ENCODE measurements at regions of chr22 and their contacts with region 1.

Region 1: DNA sequence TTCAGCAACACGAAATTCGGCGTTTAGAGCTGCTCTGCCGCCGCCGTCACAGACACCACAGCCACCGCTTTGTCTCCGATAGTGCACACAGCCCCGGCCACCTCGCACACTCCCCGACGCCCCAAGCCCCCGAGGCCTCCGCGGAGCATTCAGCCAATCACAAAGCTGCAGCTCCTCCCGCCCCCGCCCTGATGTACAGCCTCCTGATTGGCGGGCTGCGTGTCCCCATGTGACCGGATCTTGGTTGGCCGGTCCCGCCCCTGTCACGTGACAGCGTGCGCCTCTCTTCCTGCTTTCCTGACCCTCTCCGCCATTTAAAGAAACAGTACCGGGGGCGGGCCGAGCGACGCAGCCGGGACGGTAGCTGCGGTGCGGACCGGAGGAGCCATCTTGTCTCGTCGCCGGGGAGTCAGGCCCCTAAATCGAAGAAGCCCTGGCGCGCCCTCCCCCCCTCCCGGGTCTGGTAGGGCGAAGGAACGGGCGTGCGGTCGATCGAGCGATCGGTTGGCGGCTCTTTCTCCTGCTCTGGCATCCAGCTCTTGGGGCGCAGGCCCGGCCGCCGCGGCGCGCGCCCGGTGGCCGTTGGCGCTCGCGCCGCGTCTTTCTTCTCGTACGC is at the start of gene TUG1:
- DNase-seq: peak; percentile 93
- ATAC-seq: peak; percentile 92
- H3K4me3 Mint-ChIP-seq: peak within 1 kb of the TSS; percentile 95
- H3K27ac Mint-ChIP-seq: peak within 1 kb of the TSS; percentile 94
- H3K4me1 Mint-ChIP-seq: peaks cover 56% of the 10 kb centered on the region
- H3K27me3 Mint-ChIP-seq: no peaks in the 10 kb centered on the region
- CTCF ChIP-seq: no peak
- total RNA-seq, gene TUG1: 70.4 and 83.0 TPM in 2 replicates

Region 2: DNA sequence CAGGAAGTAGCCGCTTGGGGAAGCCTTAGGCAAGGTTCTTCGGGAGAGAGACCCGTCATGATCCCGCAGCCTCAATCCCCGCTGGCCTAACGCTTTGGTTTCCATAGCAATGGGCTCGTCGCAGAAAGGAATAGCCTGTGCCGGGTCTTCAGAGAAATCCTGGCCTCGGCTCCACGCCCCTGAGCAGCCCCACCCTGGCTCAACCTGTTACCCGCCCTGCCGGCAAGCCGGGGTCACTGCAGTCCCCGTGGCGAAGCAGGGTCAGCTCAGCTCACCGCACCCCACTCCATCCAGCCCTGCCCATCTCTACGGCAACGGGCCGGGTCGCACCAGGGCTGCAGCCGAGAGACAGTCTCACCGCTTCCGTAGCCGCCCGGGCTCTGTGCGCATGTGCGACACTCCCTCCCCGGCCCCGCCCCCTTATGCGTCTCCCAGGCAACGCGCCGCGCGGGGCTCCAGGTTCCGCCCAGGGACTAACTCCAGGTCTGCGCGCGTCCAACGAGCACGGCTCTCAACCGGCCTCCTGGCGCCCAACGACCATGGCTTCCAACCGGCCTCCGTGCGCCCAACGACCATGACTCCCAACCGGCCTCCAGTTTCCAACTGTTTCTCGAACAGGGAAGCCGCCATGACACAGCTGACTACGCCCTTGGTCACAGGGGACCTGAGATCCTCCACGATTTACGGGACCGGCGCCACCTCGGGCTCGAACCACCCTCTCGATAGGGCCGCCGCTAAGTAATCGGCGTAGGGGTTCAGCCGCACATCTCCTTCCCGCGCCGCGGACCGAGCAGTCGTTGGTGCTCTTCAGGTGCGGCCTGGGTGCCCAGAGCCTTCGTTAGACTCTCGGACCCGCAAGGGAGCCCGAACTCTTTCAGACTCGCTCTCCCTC is 301.3 kb before region 1 on chr22 and contains the start of gene DUSP18:
- CTCF ChIA-PET with region 1: no interaction called
- POLR2A ChIA-PET with region 1: no interaction called
- intact Hi-C with region 1: loop called (anchors 1 kb)
- DNase-seq: peak; percentile 95
- ATAC-seq: peak; percentile 94
- H3K4me3 Mint-ChIP-seq: peak within 1 kb of the TSS; percentile 97
- H3K27ac Mint-ChIP-seq: peak within 1 kb of the TSS; percentile 86
- H3K4me1 Mint-ChIP-seq: peaks cover 18% of the 10 kb centered on the region
- H3K27me3 Mint-ChIP-seq: no peaks in the 10 kb centered on the region
- CTCF ChIP-seq: no peak
- total RNA-seq, gene DUSP18: 12.0 and 13.5 TPM in 2 replicates

Region 3: GRCh38 chr22:30985561-30986208 is 16.7 kb after region 1 on chr22:
- CTCF ChIA-PET with region 1: no interaction called
- POLR2A ChIA-PET with region 1: no interaction called
- intact Hi-C with region 1: no loop called
- DNase-seq: no peak
- ATAC-seq: no peak
- H3K4me3 Mint-ChIP-seq: no peak overlapping the region
- H3K27ac Mint-ChIP-seq: no peak overlapping the region
- H3K4me1 Mint-ChIP-seq: no peaks in the 10 kb centered on the region
- H3K27me3 Mint-ChIP-seq: no peaks in the 10 kb centered on the region
- CTCF ChIP-seq: no peak

Region 4: DNA sequence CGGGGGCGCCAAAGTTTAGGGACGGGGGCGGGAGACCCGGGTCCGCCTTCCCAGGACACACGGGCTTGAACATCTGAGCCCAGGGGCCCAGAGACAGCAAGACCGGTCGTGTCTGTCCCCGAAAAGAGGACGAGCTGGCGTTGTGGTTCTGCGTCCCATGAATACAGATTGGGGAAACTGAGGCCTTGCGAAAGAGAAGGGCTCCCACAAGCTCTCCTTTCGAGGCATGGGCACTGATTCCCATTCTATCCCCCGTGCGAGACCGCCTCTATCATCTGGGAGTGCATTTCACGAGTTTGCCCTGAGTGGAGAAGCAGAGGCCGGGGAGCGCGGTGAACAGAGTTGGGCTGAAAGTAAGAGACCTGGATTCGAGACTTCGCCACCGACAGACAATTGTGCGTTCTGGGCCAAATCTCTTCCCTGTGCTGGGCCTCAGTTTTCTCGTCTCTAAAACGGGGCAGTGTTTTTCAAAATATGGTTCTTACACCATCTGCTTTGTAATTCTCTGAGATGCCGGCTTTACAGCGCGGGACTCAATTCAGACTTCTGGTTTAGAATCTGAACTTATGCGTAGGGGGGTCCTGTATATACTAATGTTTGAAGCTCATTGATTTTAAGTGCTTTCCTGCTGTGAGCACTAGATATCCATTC is 191.4 kb after region 1 on chr22:
- CTCF ChIA-PET with region 1: no interaction called
- POLR2A ChIA-PET with region 1: interaction called, 20 read pairs
- intact Hi-C with region 1: no loop called
- DNase-seq: no peak
- ATAC-seq: peak; percentile 40
- H3K4me3 Mint-ChIP-seq: peak overlapping the region; percentile 99
- H3K27ac Mint-ChIP-seq: peak overlapping the region; percentile 96
- H3K4me1 Mint-ChIP-seq: peaks cover 30% of the 10 kb centered on the region
- H3K27me3 Mint-ChIP-seq: no peaks in the 10 kb centered on the region
- CTCF ChIP-seq: no peak

Region 5: GRCh38 chr22:31345331-31346254 is 376.6 kb after region 1 on chr22:
- CTCF ChIA-PET with region 1: no interaction called
- POLR2A ChIA-PET with region 1: interaction called, 6 read pairs
- intact Hi-C with region 1: loop called (anchors 2 kb)
- DNase-seq: peak; percentile 89
- ATAC-seq: peak; percentile 58
- H3K4me3 Mint-ChIP-seq: peak overlapping the region; percentile 83
- H3K27ac Mint-ChIP-seq: peak overlapping the region; percentile 80
- H3K4me1 Mint-ChIP-seq: peaks cover 50% of the 10 kb centered on the region
- H3K27me3 Mint-ChIP-seq: no peaks in the 10 kb centered on the region
- CTCF ChIP-seq: peak; percentile 56

Region 6: DNA sequence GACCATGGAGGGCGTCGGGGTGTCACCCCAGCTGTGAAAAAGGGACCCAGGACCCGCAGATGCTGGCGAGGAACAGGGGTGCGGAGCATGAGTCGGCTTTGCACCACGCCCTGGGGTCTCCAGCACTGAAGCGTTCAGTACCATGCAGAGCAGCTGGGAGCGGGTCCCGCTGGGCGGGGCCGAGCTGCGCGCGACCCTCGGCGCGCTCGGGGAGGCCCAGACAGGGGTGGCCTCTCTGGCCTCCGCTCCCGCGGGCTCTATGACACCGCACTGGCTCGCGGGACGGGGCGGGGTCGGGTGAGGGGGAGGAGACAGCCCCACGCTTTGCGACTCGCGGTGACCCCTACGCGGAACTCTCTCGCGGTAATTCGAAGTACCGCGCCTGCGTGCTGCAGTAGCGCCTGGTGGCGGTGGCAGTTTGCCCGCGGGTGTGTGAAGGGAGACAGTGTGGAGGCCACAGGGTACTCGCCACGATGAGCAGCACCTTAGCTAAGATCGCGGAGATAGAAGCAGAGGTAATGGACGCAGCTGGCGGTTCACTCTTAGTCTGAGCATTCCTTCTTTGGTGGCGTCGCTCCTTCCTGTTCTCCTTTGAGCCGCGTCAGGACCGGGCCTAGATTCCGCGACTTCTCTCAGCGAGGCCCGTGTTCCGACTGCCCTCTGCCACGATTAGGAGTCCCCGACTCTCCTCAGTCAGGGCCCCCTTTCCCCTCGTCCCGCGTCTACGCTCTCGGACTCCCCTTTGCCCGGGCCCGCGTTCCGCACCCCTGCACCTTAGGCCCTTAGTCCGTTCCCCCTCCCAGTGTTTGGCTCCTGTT is 430.4 kb after region 1 on chr22 and contains the start of gene DRG1:
- CTCF ChIA-PET with region 1: no interaction called
- POLR2A ChIA-PET with region 1: no interaction called
- intact Hi-C with region 1: loop called (anchors 5 kb)
- DNase-seq: peak; percentile 97
- ATAC-seq: peak; percentile 98
- H3K4me3 Mint-ChIP-seq: peak within 1 kb of the TSS; percentile 93
- H3K27ac Mint-ChIP-seq: peak within 1 kb of the TSS; percentile 88
- H3K4me1 Mint-ChIP-seq: peaks cover 20% of the 10 kb centered on the region
- H3K27me3 Mint-ChIP-seq: no peaks in the 10 kb centered on the region
- CTCF ChIP-seq: no peak
- total RNA-seq, gene DRG1: 68.5 and 71.1 TPM in 2 replicates